ENCODE measurements at regions of chr1 and their contacts with region 1.

Region 1: DNA sequence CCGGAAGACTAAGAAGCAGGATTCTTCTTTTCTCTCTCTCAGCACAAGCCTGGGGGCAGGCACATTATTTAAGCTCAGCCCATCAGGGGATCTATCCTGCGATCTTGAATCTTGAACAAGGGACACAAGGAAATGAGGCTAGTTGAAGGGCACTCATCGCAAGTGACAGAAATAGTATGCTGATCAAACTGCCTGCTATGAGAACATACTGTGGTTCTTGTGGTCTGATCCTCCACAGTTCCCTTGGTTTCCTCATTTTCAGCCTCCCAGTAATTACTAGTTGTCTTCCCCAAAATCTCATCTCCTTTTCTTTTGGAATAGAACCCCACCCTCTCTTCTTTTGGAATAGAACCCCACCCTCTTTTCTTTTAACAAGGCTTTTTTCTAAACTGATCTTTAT is 6.5 kb downstream of the ANKRD45 start:
- DNase-seq: no peak
- ATAC-seq: no peak
- H3K4me3 ChIP-seq: no peak overlapping the region
- H3K4me1 ChIP-seq: no peaks in the 10 kb centered on the region
- CTCF ChIP-seq: no peak

Region 2: DNA sequence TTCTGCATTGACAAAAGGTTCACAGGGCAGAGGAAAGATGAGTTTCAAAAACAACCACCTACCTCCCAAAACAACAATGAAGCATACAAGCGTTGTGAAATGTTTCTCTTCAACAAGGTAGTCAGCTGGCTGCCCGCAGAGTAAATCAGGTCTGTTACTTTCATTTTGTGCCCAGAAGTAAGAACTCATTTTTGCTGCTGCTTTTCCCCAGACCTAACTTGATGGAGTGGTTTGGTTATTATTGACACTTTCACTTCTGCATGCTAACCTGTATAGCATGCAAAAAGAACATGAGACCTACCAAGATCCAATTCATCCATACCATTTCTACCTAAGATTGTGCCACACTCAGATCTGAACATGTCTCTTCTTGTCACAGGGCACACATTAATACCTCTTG is 61.6 kb before region 1 on chr1:
- intact Hi-C with region 1: loop called in 1 of 2 experiments (anchors 2 kb)
- DNase-seq: no peak
- ATAC-seq: no peak
- H3K4me3 ChIP-seq: no peak overlapping the region
- H3K4me1 ChIP-seq: no peaks in the 10 kb centered on the region
- CTCF ChIP-seq: no peak